ENCODE measurements at regions of chr9 and their contacts with region 1.

Region 1: DNA sequence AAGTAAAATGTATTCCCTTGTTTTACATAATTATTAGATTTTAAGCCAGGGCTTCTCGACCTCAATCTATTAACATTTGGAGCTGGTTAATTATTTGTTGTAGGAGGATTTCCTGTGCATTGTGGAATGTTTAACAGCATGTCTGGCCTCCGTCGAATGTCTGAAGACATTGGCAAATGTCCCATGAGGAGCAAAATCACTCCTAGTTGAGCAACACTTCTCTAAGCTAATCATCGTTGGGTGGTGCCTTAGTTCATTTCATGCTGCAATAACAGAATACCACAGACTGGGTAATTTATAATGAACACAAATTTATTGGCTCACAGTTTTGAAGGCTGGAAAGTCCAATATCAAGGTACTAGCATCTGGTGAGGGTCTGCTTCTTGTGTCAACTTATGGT is 13.4 kb upstream of the VPS13A start:
- DNase-seq: no peak
- ATAC-seq: no peak
- H3K4me3 ChIP-seq: no peak overlapping the region
- H3K4me3 Mint-ChIP-seq: no peak overlapping the region
- H3K27ac ChIP-seq: no peak overlapping the region
- H3K27ac Mint-ChIP-seq: no peak overlapping the region
- H3K4me1 ChIP-seq: no peaks in the 10 kb centered on the region
- H3K4me1 Mint-ChIP-seq: no peaks in the 10 kb centered on the region
- H3K27me3 ChIP-seq: no peaks in the 10 kb centered on the region
- H3K27me3 Mint-ChIP-seq: peaks cover 0 to 30% (median 4%) of the 10 kb centered on the region in 5 donors

Region 2: DNA sequence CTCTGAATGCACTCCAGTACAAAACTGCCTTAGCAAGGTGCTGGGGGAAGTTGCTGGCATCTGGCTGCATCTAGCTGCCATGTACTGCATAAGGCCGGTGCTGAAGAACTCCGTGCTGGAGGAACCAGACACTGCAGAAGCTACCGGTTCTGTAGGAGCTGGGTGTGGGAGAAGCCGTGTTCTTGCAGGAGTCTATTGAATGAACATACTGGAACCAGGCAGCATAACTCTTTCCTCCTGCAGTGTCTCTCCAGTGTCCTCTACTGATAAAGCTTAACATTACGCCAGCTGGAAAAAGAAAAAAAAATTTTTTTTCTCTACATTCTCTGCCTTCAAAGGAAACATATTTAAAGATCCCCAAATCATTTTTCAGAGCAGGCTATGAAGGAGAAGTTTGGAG is 52.0 kb after region 1 on chr9:
- CTCF ChIA-PET with region 1: interaction called, 10 read pairs
- POLR2A ChIA-PET with region 1: interaction called, 3 read pairs
- intact Hi-C with region 1: loop called (anchors 1 kb)
- DNase-seq: peak in 1 of 9 donors; percentile 2
- ATAC-seq: no peak
- H3K4me3 ChIP-seq: no peak overlapping the region
- H3K4me3 Mint-ChIP-seq: no peak overlapping the region
- H3K27ac ChIP-seq: no peak overlapping the region
- H3K27ac Mint-ChIP-seq: no peak overlapping the region
- H3K4me1 ChIP-seq: no peaks in the 10 kb centered on the region
- H3K4me1 Mint-ChIP-seq: no peaks in the 10 kb centered on the region
- H3K27me3 ChIP-seq: no peaks in the 10 kb centered on the region
- H3K27me3 Mint-ChIP-seq: no peaks in the 10 kb centered on the region

Region 3: GRCh38 chr9:77291714-77292113 is 127.8 kb after region 1 on chr9:
- CTCF ChIA-PET with region 1: no interaction called
- POLR2A ChIA-PET with region 1: no interaction called
- intact Hi-C with region 1: loop called in 1 of 2 experiments (anchors 1 kb)
- DNase-seq: no peak
- ATAC-seq: no peak
- H3K4me3 ChIP-seq: no peak overlapping the region
- H3K4me3 Mint-ChIP-seq: no peak overlapping the region
- H3K27ac ChIP-seq: no peak overlapping the region
- H3K27ac Mint-ChIP-seq: peak overlapping the region in 1 of 9 donors; percentile 21
- H3K4me1 ChIP-seq: no peaks in the 10 kb centered on the region
- H3K4me1 Mint-ChIP-seq: peaks cover 0 to 9% (median 0%) of the 10 kb centered on the region in 7 donors
- H3K27me3 ChIP-seq: no peaks in the 10 kb centered on the region
- H3K27me3 Mint-ChIP-seq: no peaks in the 10 kb centered on the region

Region 4: DNA sequence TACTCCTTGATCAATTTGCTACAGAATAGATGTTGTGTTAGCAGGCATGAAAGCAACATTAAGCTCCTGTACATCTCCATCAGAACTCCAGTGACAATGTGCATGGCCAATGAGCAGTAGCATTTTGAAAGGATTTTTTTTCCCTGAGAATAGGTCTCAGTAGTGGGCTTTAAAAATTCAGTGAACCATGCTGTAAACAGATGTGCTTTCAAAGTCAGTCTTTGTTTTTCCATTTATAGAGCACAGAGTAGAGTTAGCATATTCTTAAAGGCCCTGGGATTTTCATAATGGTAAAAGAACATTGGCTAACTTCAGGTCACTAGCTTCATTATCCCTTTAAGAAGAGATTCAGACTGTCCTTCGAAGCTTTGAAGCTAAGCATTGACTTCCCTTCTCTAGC is 164.2 kb after region 1 on chr9:
- CTCF ChIA-PET with region 1: no interaction called
- POLR2A ChIA-PET with region 1: no interaction called
- intact Hi-C with region 1: loop called in 1 of 2 experiments (anchors 5 kb)
- DNase-seq: no peak
- ATAC-seq: no peak
- H3K4me3 ChIP-seq: no peak overlapping the region
- H3K4me3 Mint-ChIP-seq: no peak overlapping the region
- H3K27ac ChIP-seq: no peak overlapping the region
- H3K27ac Mint-ChIP-seq: no peak overlapping the region
- H3K4me1 ChIP-seq: no peaks in the 10 kb centered on the region
- H3K4me1 Mint-ChIP-seq: peaks cover 0 to 5% (median 0%) of the 10 kb centered on the region in 7 donors
- H3K27me3 ChIP-seq: no peaks in the 10 kb centered on the region
- H3K27me3 Mint-ChIP-seq: no peaks in the 10 kb centered on the region

Region 5: DNA sequence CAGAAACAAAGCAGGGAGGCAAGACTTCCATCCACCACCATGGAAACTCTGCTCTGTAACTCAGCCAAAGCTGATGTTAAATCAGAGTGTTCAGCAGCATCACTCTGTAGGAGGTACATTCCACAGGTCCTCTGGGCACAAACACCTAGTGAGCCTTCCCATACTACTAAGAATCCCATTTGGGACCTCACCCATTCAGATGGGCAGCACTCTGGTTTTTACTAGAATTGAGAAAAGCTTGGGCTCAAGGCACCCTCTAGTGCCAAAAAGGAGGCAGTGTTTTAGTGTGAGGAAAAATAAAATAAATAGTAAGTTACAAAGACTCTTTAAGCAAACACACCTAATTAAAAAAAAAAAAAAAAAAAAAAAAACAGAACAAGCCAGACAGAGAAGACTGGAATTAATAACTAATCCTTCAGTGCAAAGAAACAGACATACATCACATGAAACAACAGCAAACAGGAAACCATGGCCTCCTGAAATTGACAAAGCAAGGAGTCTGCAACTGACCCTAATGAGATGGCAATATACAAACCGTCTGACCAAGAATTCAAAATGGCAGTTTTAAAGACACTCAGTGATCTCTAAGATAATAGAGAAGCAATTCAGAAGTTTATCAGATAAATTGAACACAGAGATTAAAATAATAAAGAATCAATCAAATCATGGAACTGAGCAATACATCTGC is 324.7 kb after region 1 on chr9:
- CTCF ChIA-PET with region 1: no interaction called
- POLR2A ChIA-PET with region 1: no interaction called
- intact Hi-C with region 1: loop called in 1 of 2 experiments (anchors 2 kb)
- DNase-seq: peak in 1 of 9 donors; percentile 9
- ATAC-seq: no peak
- H3K4me3 ChIP-seq: no peak overlapping the region
- H3K4me3 Mint-ChIP-seq: peak overlapping the region in 9 of 10 donors; percentile 48 to 84 (median 80)
- H3K27ac ChIP-seq: no peak overlapping the region
- H3K27ac Mint-ChIP-seq: peak overlapping the region in 4 of 9 donors; percentile 4 to 68 (median 14)
- H3K4me1 ChIP-seq: no peaks in the 10 kb centered on the region
- H3K4me1 Mint-ChIP-seq: peaks cover 6 to 24% (median 14%) of the 10 kb centered on the region in 7 donors
- H3K27me3 ChIP-seq: peaks cover 0 to 4% of the 10 kb centered on the region in 2 donors
- H3K27me3 Mint-ChIP-seq: peaks cover 3 to 23% (median 12%) of the 10 kb centered on the region in 5 donors

Region 6: GRCh38 chr9:77751341-77752091 is 587.6 kb after region 1 on chr9:
- CTCF ChIA-PET with region 1: no interaction called
- POLR2A ChIA-PET with region 1: no interaction called
- intact Hi-C with region 1: loop called in 1 of 2 experiments (anchors 5 kb)
- DNase-seq: peak in 6 of 9 donors; percentile 4 to 28 (median 22)
- ATAC-seq: peak; percentile 57
- H3K4me3 ChIP-seq: no peak overlapping the region
- H3K4me3 Mint-ChIP-seq: no peak overlapping the region
- H3K27ac ChIP-seq: no peak overlapping the region
- H3K27ac Mint-ChIP-seq: peak overlapping the region in 5 of 9 donors; percentile 4 to 86 (median 29)
- H3K4me1 ChIP-seq: no peaks in the 10 kb centered on the region
- H3K4me1 Mint-ChIP-seq: peaks cover 15 to 34% (median 28%) of the 10 kb centered on the region in 7 donors
- H3K27me3 ChIP-seq: no peaks in the 10 kb centered on the region
- H3K27me3 Mint-ChIP-seq: no peaks in the 10 kb centered on the region

Region 7: DNA sequence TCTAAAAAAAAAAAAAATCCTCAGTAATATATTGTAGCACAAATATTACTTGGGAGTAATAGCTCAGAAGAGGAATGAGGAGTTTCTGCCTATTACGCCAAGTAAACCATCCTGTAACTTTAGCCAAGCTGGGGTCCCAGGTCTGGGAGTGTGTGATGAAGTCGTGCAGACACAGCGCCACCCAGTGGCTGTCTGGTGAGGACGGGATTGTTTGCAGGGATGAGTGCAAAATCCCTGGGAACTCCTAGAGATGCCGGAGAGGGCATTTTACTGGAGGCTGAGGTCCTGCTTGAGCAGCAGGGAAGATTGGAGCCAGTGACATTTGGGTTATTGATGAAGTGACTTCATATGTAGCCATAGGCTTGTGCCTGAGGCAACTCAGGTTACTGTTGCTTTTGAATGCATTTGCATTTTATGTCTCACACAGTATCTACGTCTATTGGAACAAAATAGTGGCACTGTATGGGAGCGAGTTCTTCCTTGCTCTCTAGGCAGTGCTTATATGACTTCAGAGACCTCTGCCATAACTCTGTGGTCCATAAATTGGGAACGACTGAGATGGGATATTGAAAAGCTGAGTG is 1205.8 kb after region 1 on chr9:
- CTCF ChIA-PET with region 1: no interaction called
- POLR2A ChIA-PET with region 1: no interaction called
- intact Hi-C with region 1: loop called in 1 of 2 experiments (anchors 2 kb)
- DNase-seq: peak in 8 of 9 donors; percentile 17 to 54 (median 40)
- ATAC-seq: peak; percentile 47
- H3K4me3 ChIP-seq: no peak overlapping the region
- H3K4me3 Mint-ChIP-seq: no peak overlapping the region
- H3K27ac ChIP-seq: no peak overlapping the region
- H3K27ac Mint-ChIP-seq: no peak overlapping the region
- H3K4me1 ChIP-seq: no peaks in the 10 kb centered on the region
- H3K4me1 Mint-ChIP-seq: peaks cover 0 to 3% (median 0%) of the 10 kb centered on the region in 7 donors
- H3K27me3 ChIP-seq: no peaks in the 10 kb centered on the region
- H3K27me3 Mint-ChIP-seq: peaks cover 27 to 37% (median 29%) of the 10 kb centered on the region in 5 donors

Region 8: DNA sequence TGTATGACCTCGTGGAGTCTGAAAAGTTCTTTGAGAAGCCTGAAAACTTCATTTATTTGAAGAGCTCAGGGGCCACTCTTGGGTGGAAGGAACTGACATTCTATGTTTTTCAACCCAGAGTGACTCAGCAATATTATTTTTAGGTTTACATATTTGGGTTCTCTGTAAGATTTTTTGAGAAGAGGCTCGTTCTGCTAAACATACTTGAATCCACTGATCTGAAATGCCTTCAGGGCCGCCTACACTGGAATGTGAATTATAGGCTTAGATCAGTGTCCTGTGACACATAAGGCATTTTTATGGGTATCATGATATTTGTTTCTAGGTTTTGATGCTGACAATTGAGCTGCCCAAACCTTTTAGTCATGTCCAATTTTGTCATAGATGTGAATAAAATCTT is 1219.2 kb after region 1 on chr9:
- CTCF ChIA-PET with region 1: no interaction called
- POLR2A ChIA-PET with region 1: no interaction called
- intact Hi-C with region 1: no loop called
- DNase-seq: no peak
- ATAC-seq: no peak
- H3K4me3 ChIP-seq: no peak overlapping the region
- H3K4me3 Mint-ChIP-seq: no peak overlapping the region
- H3K27ac ChIP-seq: no peak overlapping the region
- H3K27ac Mint-ChIP-seq: no peak overlapping the region
- H3K4me1 ChIP-seq: no peaks in the 10 kb centered on the region
- H3K4me1 Mint-ChIP-seq: no peaks in the 10 kb centered on the region
- H3K27me3 ChIP-seq: no peaks in the 10 kb centered on the region
- H3K27me3 Mint-ChIP-seq: peaks cover 0 to 15% (median 5%) of the 10 kb centered on the region in 5 donors

Measured in naive thymus-derived CD4-positive, alpha-beta T cell (primary cell).